Natural killer cell (primary cell): ENCODE measurements at regions of chr12 and their contacts with region 1.

Region 1: DNA sequence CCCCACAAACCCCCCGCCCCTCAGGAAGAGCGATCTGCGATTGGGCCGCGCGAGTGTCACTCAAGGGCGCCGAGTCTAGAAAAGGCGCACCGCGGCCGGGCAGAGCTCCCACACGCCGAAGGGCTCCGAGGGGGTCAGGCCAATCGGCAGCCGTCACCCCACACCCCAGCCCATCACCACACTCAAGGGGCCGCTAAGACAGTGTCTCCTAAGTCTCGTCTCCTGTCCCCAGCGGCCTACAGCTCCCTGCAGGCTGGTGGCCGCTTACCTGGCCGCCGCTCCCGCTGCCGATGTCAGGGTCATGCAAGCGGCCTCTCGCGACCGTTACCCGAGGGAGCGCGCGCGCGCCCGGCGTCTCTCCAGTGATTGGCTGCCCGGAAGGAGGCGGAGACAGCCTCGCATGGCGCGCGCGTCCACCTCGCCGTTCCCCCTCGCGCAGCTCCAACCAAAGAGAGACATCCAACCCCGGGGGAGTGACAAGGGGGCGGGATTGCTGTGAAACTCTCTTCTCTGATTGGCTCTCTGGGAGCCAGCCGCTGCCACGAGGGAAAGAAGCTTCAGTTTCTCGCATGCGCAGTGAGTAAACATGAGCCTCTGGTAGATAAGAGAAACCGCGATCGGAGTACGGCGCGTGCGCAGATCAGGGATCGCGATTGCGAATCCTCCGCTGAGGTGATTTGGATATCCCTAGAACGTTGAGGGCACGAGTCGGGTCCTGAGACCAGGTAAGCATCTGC is at the starts of genes MPHOSPH9 and MTRFR:
- DNase-seq: peak; percentile 98 to 99
- ATAC-seq: peak; percentile 91 to 98 (median 92)
- H3K4me3 ChIP-seq: peak within 1 kb of the TSS; percentile 92
- H3K4me3 Mint-ChIP-seq: peak within 1 kb of the TSS; percentile 98
- H3K27ac ChIP-seq: peak within 1 kb of the TSS; percentile 86
- H3K27ac Mint-ChIP-seq: peak within 1 kb of the TSS; percentile 99
- H3K4me1 ChIP-seq: peaks cover 50% of the 10 kb centered on the region
- H3K4me1 Mint-ChIP-seq: peaks cover 60 to 64% of the 10 kb centered on the region in 2 donors
- H3K27me3 ChIP-seq: no peaks in the 10 kb centered on the region
- H3K27me3 Mint-ChIP-seq: no peaks in the 10 kb centered on the region
- CTCF ChIP-seq: no peak
- total RNA-seq, gene MPHOSPH9: 97.6 to 114 (median 109) TPM
- total RNA-seq, gene MTRFR: 16.2 to 18.5 (median 17.0) TPM

Region 2: DNA sequence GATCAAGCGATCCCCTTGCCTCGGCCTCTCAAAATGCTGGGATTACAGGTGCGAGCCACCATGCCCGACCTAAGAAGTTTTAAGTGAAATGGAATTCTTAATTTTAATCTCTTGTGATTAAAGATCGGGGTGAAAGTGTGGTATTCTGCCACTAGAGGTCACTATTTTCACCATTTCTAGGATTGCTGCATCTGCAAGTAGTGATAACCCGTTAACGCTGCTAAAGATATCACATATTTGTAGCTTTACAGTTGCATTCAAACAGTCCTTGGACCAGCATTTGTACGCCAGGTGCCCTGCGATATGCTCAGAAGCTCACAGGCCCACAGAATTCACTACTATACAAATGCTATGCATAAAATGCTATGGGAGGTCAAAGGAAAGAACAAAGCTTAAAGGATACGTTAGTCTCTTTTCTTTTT is 439.3 kb before region 1 on chr12:
- intact Hi-C with region 1: loop called (anchors 2 kb)
- DNase-seq: peak in 1 of 2 donors; percentile 77
- ATAC-seq: peak; percentile 77 to 81 (median 78)
- H3K4me3 ChIP-seq: no peak overlapping the region
- H3K4me3 Mint-ChIP-seq: no peak overlapping the region
- H3K27ac ChIP-seq: no peak overlapping the region
- H3K27ac Mint-ChIP-seq: no peak overlapping the region
- H3K4me1 ChIP-seq: no peaks in the 10 kb centered on the region
- H3K4me1 Mint-ChIP-seq: peaks cover 4% of the 10 kb centered on the region in 2 donors
- H3K27me3 ChIP-seq: no peaks in the 10 kb centered on the region
- H3K27me3 Mint-ChIP-seq: no peaks in the 10 kb centered on the region
- CTCF ChIP-seq: peak; percentile 81

Region 3: GRCh38 chr12:122974274-122974891 is 258.6 kb before region 1 on chr12:
- intact Hi-C with region 1: loop called (anchors 2 kb)
- DNase-seq: peak; percentile 97 to 99
- ATAC-seq: peak; percentile 82 to 94 (median 86)
- H3K4me3 ChIP-seq: peak overlapping the region; percentile 93
- H3K4me3 Mint-ChIP-seq: peak overlapping the region; percentile 95
- H3K27ac ChIP-seq: peak overlapping the region; percentile 98
- H3K27ac Mint-ChIP-seq: peak overlapping the region; percentile 97
- H3K4me1 ChIP-seq: peaks cover 35% of the 10 kb centered on the region
- H3K4me1 Mint-ChIP-seq: peaks cover 4 to 23% of the 10 kb centered on the region in 2 donors
- H3K27me3 ChIP-seq: no peaks in the 10 kb centered on the region
- H3K27me3 Mint-ChIP-seq: no peaks in the 10 kb centered on the region
- CTCF ChIP-seq: no peak

Region 4: GRCh38 chr12:123075646-123076171 is 157.3 kb before region 1 on chr12:
- intact Hi-C with region 1: loop called (anchors 10 kb)
- DNase-seq: peak; percentile 73 to 84
- ATAC-seq: peak; percentile 78 to 86 (median 83)
- H3K4me3 ChIP-seq: peak overlapping the region; percentile 58
- H3K4me3 Mint-ChIP-seq: peak overlapping the region; percentile 96
- H3K27ac ChIP-seq: peak overlapping the region; percentile 94
- H3K27ac Mint-ChIP-seq: peak overlapping the region; percentile 97 to 98
- H3K4me1 ChIP-seq: peaks cover 73% of the 10 kb centered on the region
- H3K4me1 Mint-ChIP-seq: peaks cover 67 to 85% of the 10 kb centered on the region in 2 donors
- H3K27me3 ChIP-seq: no peaks in the 10 kb centered on the region
- H3K27me3 Mint-ChIP-seq: no peaks in the 10 kb centered on the region
- CTCF ChIP-seq: peak; percentile 32

Region 5: GRCh38 chr12:123150744-123151456 is 82.1 kb before region 1 on chr12 and contains the start of gene PITPNM2:
- intact Hi-C with region 1: loop called (anchors 10 kb)
- DNase-seq: peak; percentile 58 to 77
- ATAC-seq: peak; percentile 89 to 90 (median 90)
- H3K4me3 ChIP-seq: peak within 1 kb of the TSS; percentile 40
- H3K4me3 Mint-ChIP-seq: peak within 1 kb of the TSS; percentile 86
- H3K27ac ChIP-seq: no peak within 1 kb of the TSS
- H3K27ac Mint-ChIP-seq: peak within 1 kb of the TSS; percentile 65 to 71
- H3K4me1 ChIP-seq: peaks cover 29% of the 10 kb centered on the region
- H3K4me1 Mint-ChIP-seq: peaks cover 36 to 39% of the 10 kb centered on the region in 2 donors
- H3K27me3 ChIP-seq: no peaks in the 10 kb centered on the region
- H3K27me3 Mint-ChIP-seq: no peaks in the 10 kb centered on the region
- CTCF ChIP-seq: no peak
- total RNA-seq, gene PITPNM2: 38.9 to 94.6 (median 42.5) TPM